ENCODE measurements at regions of chr1 and their contacts with region 1.

Region 1: GRCh38 chr1:208243967-208244916 is at the start of gene PLXNA2:
- DNase-seq: peak; percentile 92
- ATAC-seq: peak; percentile 87
- total RNA-seq, gene PLXNA2: 14.4 TPM

Region 2: GRCh38 chr1:208132287-208132883 is 111.9 kb before region 1 on chr1:
- intact Hi-C with region 1: loop called (anchors 5 kb)
- DNase-seq: peak; percentile 91
- ATAC-seq: peak; percentile 91

Measured in Right ventricle myocardium superior (tissue), 1 donor.